Activated T-helper 1 cell treated with anti-CD3 and anti-CD28 coated beads, Interleukin-12 subunit alpha, Interleukin-12 subunit beta, Interleukin-2, Interleukin-4 antibody, amounts not matched to agents 30 ng/mL and 10 ng/mL and 1 ng/mL, durations not matched to agents 14 hours and 24 hours and 36 hours (primary cell): ENCODE measurements at regions of chr6 and their contacts with region 1.

Region 1: GRCh38 chr6:129251669-129252376 is 368.9 kb downstream of the LAMA2 start:
- DNase-seq: peak; percentile 27
- H3K4me3 Mint-ChIP-seq: no peak overlapping the region
- H3K27ac Mint-ChIP-seq: no peak overlapping the region
- H3K4me1 Mint-ChIP-seq: peaks cover 19% of the 10 kb centered on the region
- H3K27me3 Mint-ChIP-seq: peaks cover 37% of the 10 kb centered on the region

Region 2: GRCh38 chr6:128807577-128807976 is 444.2 kb before region 1 on chr6:
- intact Hi-C with region 1: loop called (anchors 5 kb)
- DNase-seq: no peak
- H3K4me3 Mint-ChIP-seq: no peak overlapping the region
- H3K27ac Mint-ChIP-seq: no peak overlapping the region
- H3K4me1 Mint-ChIP-seq: no peaks in the 10 kb centered on the region
- H3K27me3 Mint-ChIP-seq: no peaks in the 10 kb centered on the region